ENCODE measurements at regions of chr17 and their contacts with region 1.

Region 1: DNA sequence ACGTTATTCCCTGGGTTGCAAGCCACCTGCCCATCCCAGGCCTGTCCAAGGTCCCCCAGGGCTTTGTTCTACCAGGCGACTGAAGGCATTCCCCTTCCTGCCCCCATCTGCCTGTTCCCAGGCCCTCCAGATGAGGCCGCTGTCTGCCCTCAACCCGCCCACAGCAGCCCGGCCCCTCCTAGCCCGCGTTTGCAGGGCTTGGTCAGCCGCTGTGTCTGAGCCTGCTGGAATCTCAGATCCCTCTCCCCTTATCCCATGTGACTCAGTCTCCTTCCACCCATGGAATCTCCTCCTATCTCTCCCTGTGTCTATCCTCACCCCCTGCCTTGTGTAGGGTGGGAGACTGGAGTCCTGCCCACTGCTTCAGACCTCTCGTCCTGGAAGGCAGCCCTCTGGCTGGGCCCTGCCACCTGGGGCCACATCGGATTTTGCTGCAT is 186.0 kb upstream of the TNRC6C start:
- DNase-seq: peak; percentile 59 to 63 (median 60)
- H3K4me3 ChIP-seq: no peak overlapping the region
- H3K4me3 Mint-ChIP-seq: peak overlapping the region in 2 of 8 donors; percentile 0 to 47
- H3K27ac ChIP-seq: no peak overlapping the region
- H3K27ac Mint-ChIP-seq: peak overlapping the region in 3 of 7 donors; percentile 38 to 57 (median 38)
- H3K4me1 ChIP-seq: peaks cover 8% of the 10 kb centered on the region
- H3K4me1 Mint-ChIP-seq: peaks cover 7 to 20% (median 14%) of the 10 kb centered on the region in 4 donors
- H3K27me3 ChIP-seq: no peaks in the 10 kb centered on the region
- H3K27me3 Mint-ChIP-seq: peaks cover 1 to 2% of the 10 kb centered on the region in 2 donors

Region 2: GRCh38 chr17:77542551-77543490 is 229.7 kb before region 1 on chr17:
- CTCF ChIA-PET with region 1: interaction called, 8 read pairs
- POLR2A ChIA-PET with region 1: interaction called, 3 read pairs
- intact Hi-C with region 1: loop called (anchors 1 kb)
- DNase-seq: peak; percentile 49 to 60 (median 57)
- H3K4me3 ChIP-seq: no peak overlapping the region
- H3K4me3 Mint-ChIP-seq: no peak overlapping the region
- H3K27ac ChIP-seq: no peak overlapping the region
- H3K27ac Mint-ChIP-seq: peak overlapping the region in 1 of 7 donors; percentile 9
- H3K4me1 ChIP-seq: no peaks in the 10 kb centered on the region
- H3K4me1 Mint-ChIP-seq: no peaks in the 10 kb centered on the region
- H3K27me3 ChIP-seq: peaks cover 7% of the 10 kb centered on the region
- H3K27me3 Mint-ChIP-seq: peaks cover 3 to 14% of the 10 kb centered on the region in 2 donors

Region 3: DNA sequence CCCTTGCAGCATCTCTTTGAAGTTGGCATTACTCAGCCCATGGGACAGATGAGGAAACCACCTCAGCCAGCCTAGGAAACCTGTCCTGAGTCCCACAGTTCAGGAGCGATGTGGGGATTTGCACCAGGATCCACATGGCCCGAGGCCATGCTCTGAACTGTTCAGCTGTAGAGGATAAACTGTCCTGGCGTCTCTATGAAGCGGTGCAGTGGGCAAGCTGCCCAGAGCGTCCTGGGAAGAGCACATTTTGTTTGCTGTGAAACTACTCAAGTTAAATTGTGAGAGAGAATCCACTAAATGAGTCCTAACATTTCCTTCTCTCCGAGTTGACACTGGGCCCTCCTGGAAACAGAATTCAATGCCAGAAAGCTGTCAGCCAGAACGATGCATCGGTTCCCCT is 90.6 kb before region 1 on chr17:
- CTCF ChIA-PET with region 1: no interaction called
- POLR2A ChIA-PET with region 1: no interaction called
- intact Hi-C with region 1: no loop called
- DNase-seq: no peak
- H3K4me3 ChIP-seq: no peak overlapping the region
- H3K4me3 Mint-ChIP-seq: no peak overlapping the region
- H3K27ac ChIP-seq: no peak overlapping the region
- H3K27ac Mint-ChIP-seq: no peak overlapping the region
- H3K4me1 ChIP-seq: no peaks in the 10 kb centered on the region
- H3K4me1 Mint-ChIP-seq: peaks cover 0 to 4% (median under 1%) of the 10 kb centered on the region in 4 donors
- H3K27me3 ChIP-seq: no peaks in the 10 kb centered on the region
- H3K27me3 Mint-ChIP-seq: no peaks in the 10 kb centered on the region

Region 4: GRCh38 chr17:77744066-77744988 is 28.2 kb before region 1 on chr17:
- CTCF ChIA-PET with region 1: no interaction called
- POLR2A ChIA-PET with region 1: no interaction called
- intact Hi-C with region 1: no loop called
- DNase-seq: no peak
- H3K4me3 ChIP-seq: no peak overlapping the region
- H3K4me3 Mint-ChIP-seq: no peak overlapping the region
- H3K27ac ChIP-seq: no peak overlapping the region
- H3K27ac Mint-ChIP-seq: peak overlapping the region in 2 of 7 donors; percentile 18 to 30
- H3K4me1 ChIP-seq: no peaks in the 10 kb centered on the region
- H3K4me1 Mint-ChIP-seq: no peaks in the 10 kb centered on the region
- H3K27me3 ChIP-seq: no peaks in the 10 kb centered on the region
- H3K27me3 Mint-ChIP-seq: peaks cover 0 to 4% of the 10 kb centered on the region in 2 donors

Region 5: DNA sequence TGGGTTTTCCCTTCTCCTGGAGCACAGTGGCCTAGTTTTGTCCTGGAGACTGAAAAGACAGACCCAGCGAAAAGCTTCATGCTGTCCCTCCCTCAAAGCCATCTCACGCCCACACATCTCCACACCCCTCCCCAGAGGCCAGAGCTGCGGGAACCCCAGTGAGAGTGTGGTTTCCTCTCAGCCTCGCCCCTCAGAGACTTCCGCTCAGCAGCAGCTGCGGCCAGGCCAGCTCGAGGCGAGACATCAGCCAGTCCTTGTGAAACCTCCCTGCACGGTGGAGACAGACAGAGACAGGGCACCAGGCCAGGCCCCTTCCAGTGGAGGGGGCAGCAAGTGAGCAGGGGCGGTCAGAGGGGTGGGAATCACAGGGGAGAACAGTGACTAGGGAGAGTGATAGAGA is 109.1 kb after region 1 on chr17:
- CTCF ChIA-PET with region 1: interaction called, 4 read pairs
- POLR2A ChIA-PET with region 1: no interaction called
- intact Hi-C with region 1: loop called (anchors 2 kb)
- DNase-seq: peak; percentile 73 to 85 (median 75)
- H3K4me3 ChIP-seq: peak overlapping the region; percentile 39 to 55
- H3K4me3 Mint-ChIP-seq: peak overlapping the region; percentile 80 to 92 (median 86)
- H3K27ac ChIP-seq: peak overlapping the region; percentile 99
- H3K27ac Mint-ChIP-seq: peak overlapping the region; percentile 96 to 100 (median 99)
- H3K4me1 ChIP-seq: peaks cover 89% of the 10 kb centered on the region
- H3K4me1 Mint-ChIP-seq: peaks cover 65 to 94% (median 81%) of the 10 kb centered on the region in 4 donors
- H3K27me3 ChIP-seq: no peaks in the 10 kb centered on the region
- H3K27me3 Mint-ChIP-seq: no peaks in the 10 kb centered on the region

Region 6: GRCh38 chr17:77963441-77963840 is 191.0 kb after region 1 on chr17:
- CTCF ChIA-PET with region 1: interaction called, 18 read pairs
- POLR2A ChIA-PET with region 1: interaction called, 42 read pairs
- intact Hi-C with region 1: loop called (anchors 1 kb)
- DNase-seq: peak; percentile 68 to 84 (median 75)
- H3K4me3 ChIP-seq: no peak overlapping the region
- H3K4me3 Mint-ChIP-seq: peak overlapping the region; percentile 72 to 85 (median 81)
- H3K27ac ChIP-seq: no peak overlapping the region
- H3K27ac Mint-ChIP-seq: peak overlapping the region; percentile 3 to 86 (median 65)
- H3K4me1 ChIP-seq: peaks cover 73% of the 10 kb centered on the region
- H3K4me1 Mint-ChIP-seq: peaks cover 56 to 85% (median 75%) of the 10 kb centered on the region in 4 donors
- H3K27me3 ChIP-seq: no peaks in the 10 kb centered on the region
- H3K27me3 Mint-ChIP-seq: no peaks in the 10 kb centered on the region

Region 7: DNA sequence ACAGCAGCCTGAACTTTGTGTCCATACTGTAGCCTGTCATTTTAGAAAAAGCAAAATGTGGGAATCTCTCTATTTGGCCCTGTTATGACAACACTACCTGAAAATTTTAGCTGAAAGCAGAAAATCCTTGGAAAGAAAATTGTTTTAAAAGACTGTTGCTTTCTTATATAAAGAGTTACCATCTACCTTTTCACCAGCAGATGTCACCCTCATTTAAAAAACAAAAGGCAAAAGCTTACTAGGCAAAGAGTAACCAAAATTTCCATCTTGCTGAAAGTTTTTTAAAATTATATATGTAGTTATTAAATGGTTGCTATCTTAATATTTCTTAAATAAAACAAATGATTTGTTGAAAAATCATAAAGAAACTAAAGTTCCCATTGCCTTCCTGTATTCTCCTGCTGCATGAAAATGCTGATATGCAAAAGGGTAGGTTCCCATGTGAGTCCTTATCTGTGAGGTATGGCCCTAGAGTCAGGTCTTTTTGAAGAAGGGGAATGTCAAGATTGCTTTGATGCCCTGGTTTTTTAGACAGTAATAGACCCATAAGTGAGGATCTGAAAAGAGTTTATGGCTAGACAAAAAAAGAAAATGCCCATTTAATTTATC is 247.0 kb after region 1 on chr17:
- CTCF ChIA-PET with region 1: interaction called, 111 read pairs
- POLR2A ChIA-PET with region 1: interaction called, 3 read pairs
- intact Hi-C with region 1: loop called (anchors 1 kb)
- DNase-seq: peak in 4 of 5 donors; percentile 26 to 38 (median 29)
- H3K4me3 ChIP-seq: no peak overlapping the region
- H3K4me3 Mint-ChIP-seq: peak overlapping the region in 2 of 8 donors; percentile 21 to 71
- H3K27ac ChIP-seq: peak overlapping the region; percentile 12
- H3K27ac Mint-ChIP-seq: peak overlapping the region in 5 of 7 donors; percentile 25 to 70 (median 33)
- H3K4me1 ChIP-seq: peaks cover 23% of the 10 kb centered on the region
- H3K4me1 Mint-ChIP-seq: peaks cover 20 to 31% (median 24%) of the 10 kb centered on the region in 4 donors
- H3K27me3 ChIP-seq: no peaks in the 10 kb centered on the region
- H3K27me3 Mint-ChIP-seq: no peaks in the 10 kb centered on the region

Measured in CD4-positive, alpha-beta memory T cell (primary cell).